ENCODE measurements at regions of chr4 and their contacts with region 1.

Region 1: GRCh38 chr4:67549123-67549522 is 3.8 kb upstream of the CENPC start:
- DNase-seq: no peak
- H3K4me3 Mint-ChIP-seq: no peak overlapping the region
- H3K27ac Mint-ChIP-seq: no peak overlapping the region
- H3K4me1 Mint-ChIP-seq: peaks cover 35% of the 10 kb centered on the region
- H3K27me3 Mint-ChIP-seq: no peaks in the 10 kb centered on the region

Region 2: DNA sequence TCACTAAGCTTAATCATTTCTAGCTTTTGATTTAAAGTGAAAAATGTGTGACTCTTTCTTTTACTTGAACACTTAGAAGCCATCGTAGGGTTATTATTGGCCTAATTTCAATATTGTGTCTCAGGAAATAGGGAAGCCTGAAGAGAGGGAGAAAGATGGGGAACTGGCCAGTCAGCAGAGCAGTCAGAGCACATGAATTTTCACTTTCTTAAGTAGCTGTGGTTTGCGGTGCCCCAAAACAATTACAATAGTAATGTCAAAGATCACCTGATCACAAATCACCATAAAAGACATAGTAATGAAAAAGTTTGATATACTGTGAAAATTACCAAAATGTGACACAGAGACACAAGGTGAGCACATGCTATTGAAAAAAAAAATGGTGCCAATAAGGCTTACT is 49.3 kb before region 1 on chr4:
- CTCF ChIA-PET with region 1: no interaction called
- DNase-seq: no peak
- H3K4me3 Mint-ChIP-seq: no peak overlapping the region
- H3K27ac Mint-ChIP-seq: no peak overlapping the region
- H3K4me1 Mint-ChIP-seq: no peaks in the 10 kb centered on the region
- H3K27me3 Mint-ChIP-seq: no peaks in the 10 kb centered on the region

Region 3: GRCh38 chr4:67533112-67533511 is 16.0 kb before region 1 on chr4:
- CTCF ChIA-PET with region 1: no interaction called
- DNase-seq: no peak
- H3K4me3 Mint-ChIP-seq: no peak overlapping the region
- H3K27ac Mint-ChIP-seq: no peak overlapping the region
- H3K4me1 Mint-ChIP-seq: peaks cover 4% of the 10 kb centered on the region
- H3K27me3 Mint-ChIP-seq: no peaks in the 10 kb centered on the region

Region 4: DNA sequence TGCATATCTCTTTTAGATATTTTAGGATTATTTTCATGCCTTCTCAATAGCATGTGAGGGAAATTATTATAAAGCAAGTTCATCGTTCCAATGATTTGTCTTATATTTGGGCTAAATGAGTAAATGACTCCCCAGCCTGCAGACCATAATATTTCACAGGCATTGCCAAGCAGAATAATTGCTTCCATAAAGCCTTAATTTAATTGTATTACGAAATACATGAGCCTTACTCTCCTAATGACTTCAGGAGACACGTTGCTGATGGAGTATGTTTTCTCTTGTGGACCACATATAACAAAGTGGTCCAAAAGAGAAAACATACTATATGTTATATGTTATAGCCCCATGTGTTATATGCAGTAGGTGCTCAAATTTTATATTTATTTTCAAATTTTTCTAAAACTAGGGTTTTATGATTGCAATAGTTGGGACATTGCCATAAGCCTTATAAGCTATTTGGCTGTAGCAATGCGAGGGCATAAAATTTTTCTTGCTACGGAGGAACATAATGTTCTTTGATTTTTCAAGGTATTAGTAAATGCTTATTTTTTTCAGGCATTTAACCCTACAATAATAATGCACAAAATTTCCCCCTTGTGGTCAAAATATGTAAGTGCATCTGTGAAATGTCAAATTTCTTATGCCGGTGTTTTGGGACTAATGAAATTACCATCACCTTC is 360.9 kb after region 1 on chr4:
- CTCF ChIA-PET with region 1: interaction called, 25 read pairs
- DNase-seq: no peak
- H3K4me3 Mint-ChIP-seq: no peak overlapping the region
- H3K27ac Mint-ChIP-seq: no peak overlapping the region
- H3K4me1 Mint-ChIP-seq: no peaks in the 10 kb centered on the region
- H3K27me3 Mint-ChIP-seq: peaks cover 7% of the 10 kb centered on the region

Region 5: DNA sequence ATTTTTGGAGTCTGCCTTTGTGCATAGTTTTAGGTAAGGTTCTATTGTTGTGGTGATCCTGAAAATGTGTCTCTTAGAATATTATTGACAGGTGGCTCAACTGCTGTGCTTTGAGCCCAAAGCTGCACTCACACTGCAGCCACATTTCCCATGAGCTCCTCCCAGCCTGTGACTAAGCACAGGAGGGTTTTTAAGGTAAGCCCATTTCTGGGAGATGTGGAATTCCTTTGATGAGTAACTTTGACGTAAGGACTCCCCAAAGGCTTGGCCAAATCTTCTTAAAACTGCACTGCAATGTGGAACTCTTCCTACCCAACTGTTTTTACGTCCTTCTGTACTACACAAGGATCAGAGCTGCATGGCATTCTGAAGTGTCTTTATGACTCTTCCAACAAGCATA is 434.2 kb after region 1 on chr4:
- CTCF ChIA-PET with region 1: no interaction called
- DNase-seq: no peak
- H3K4me3 Mint-ChIP-seq: no peak overlapping the region
- H3K27ac Mint-ChIP-seq: no peak overlapping the region
- H3K4me1 Mint-ChIP-seq: no peaks in the 10 kb centered on the region
- H3K27me3 Mint-ChIP-seq: peaks cover 4% of the 10 kb centered on the region